ENCODE measurements at regions of chr16 and their contacts with region 1.

Region 1: GRCh38 chr16:31265329-31266245 is 5.8 kb downstream of the ITGAM start:
- DNase-seq: peak; percentile 78
- H3K4me3 Mint-ChIP-seq: peak overlapping the region; percentile 80
- H3K27ac Mint-ChIP-seq: peak overlapping the region; percentile 95
- H3K4me1 Mint-ChIP-seq: peaks cover 71% of the 10 kb centered on the region
- H3K27me3 Mint-ChIP-seq: no peaks in the 10 kb centered on the region

Region 2: GRCh38 chr16:31157136-31157535 is 108.5 kb before region 1 on chr16:
- intact Hi-C with region 1: no loop called
- DNase-seq: no peak
- H3K4me3 Mint-ChIP-seq: peak overlapping the region; percentile 13
- H3K27ac Mint-ChIP-seq: no peak overlapping the region
- H3K4me1 Mint-ChIP-seq: no peaks in the 10 kb centered on the region
- H3K27me3 Mint-ChIP-seq: peaks cover 20% of the 10 kb centered on the region

Region 3: GRCh38 chr16:31215287-31216162 is 50.1 kb before region 1 on chr16:
- intact Hi-C with region 1: loop called (anchors 1 kb)
- DNase-seq: no peak
- H3K4me3 Mint-ChIP-seq: peak overlapping the region; percentile 74
- H3K27ac Mint-ChIP-seq: no peak overlapping the region
- H3K4me1 Mint-ChIP-seq: peaks cover 23% of the 10 kb centered on the region
- H3K27me3 Mint-ChIP-seq: peaks cover 31% of the 10 kb centered on the region

Region 4: GRCh38 chr16:31253642-31254045 is 11.9 kb before region 1 on chr16:
- intact Hi-C with region 1: loop called (anchors 1 kb)
- DNase-seq: peak; percentile 50
- H3K4me3 Mint-ChIP-seq: peak overlapping the region; percentile 82
- H3K27ac Mint-ChIP-seq: peak overlapping the region; percentile 96
- H3K4me1 Mint-ChIP-seq: peaks cover 45% of the 10 kb centered on the region
- H3K27me3 Mint-ChIP-seq: no peaks in the 10 kb centered on the region

Region 5: DNA sequence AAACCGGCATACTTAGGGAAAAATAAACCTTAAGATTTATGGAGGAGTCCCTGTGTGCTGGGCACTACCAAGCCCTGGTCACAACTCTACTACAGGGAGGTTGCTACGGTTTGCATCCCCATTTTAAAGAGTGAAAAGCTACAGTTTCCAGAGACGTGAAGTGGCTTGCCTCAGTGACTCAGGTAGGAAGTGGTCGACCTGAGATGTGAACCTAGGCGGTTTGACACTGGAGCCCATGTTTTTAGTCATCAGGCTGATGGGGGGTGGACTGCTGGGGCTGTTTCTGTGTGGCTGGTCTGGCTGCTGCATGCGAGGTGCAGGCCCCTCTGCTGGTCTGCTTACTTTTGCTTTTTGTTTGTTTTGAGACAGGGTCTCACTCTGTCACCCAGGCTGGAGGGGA is 156.0 kb after region 1 on chr16:
- intact Hi-C with region 1: loop called (anchors 1 kb)
- DNase-seq: peak; percentile 69
- H3K4me3 Mint-ChIP-seq: peak overlapping the region; percentile 44
- H3K27ac Mint-ChIP-seq: peak overlapping the region; percentile 77
- H3K4me1 Mint-ChIP-seq: peaks cover 62% of the 10 kb centered on the region
- H3K27me3 Mint-ChIP-seq: peaks cover 2% of the 10 kb centered on the region

Measured in activated T-helper 1 cell treated with anti-CD3 and anti-CD28 coated beads, Interleukin-12 subunit alpha, Interleukin-12 subunit beta, Interleukin-2, Interleukin-4 antibody, amounts not matched to agents 30 ng/mL and 10 ng/mL and 1 ng/mL, durations not matched to agents 14 hours and 24 hours and 36 hours (primary cell).